Calu3 (cell line): ENCODE measurements at regions of chr11 and their contacts with region 1.

Region 1: GRCh38 chr11:18105802-18106574 is at the start of gene SAAL1:
- DNase-seq: peak; percentile 91
- H3K4me3 Mint-ChIP-seq: peak within 1 kb of the TSS; percentile 97
- H3K27ac Mint-ChIP-seq: peak within 1 kb of the TSS; percentile 81
- H3K4me1 Mint-ChIP-seq: peaks cover 21% of the 10 kb centered on the region
- H3K27me3 Mint-ChIP-seq: peaks cover 11% of the 10 kb centered on the region
- CTCF ChIP-seq: peak; percentile 79
- total RNA-seq, gene SAAL1: 23.9 and 29.3 TPM in 2 replicates

Region 2: GRCh38 chr11:17927681-17928347 is 178.2 kb before region 1 on chr11:
- CTCF ChIA-PET with region 1: no interaction called
- intact Hi-C with region 1: no loop called
- DNase-seq: no peak
- H3K4me3 Mint-ChIP-seq: no peak overlapping the region
- H3K27ac Mint-ChIP-seq: no peak overlapping the region
- H3K4me1 Mint-ChIP-seq: no peaks in the 10 kb centered on the region
- H3K27me3 Mint-ChIP-seq: no peaks in the 10 kb centered on the region
- CTCF ChIP-seq: no peak

Region 3: DNA sequence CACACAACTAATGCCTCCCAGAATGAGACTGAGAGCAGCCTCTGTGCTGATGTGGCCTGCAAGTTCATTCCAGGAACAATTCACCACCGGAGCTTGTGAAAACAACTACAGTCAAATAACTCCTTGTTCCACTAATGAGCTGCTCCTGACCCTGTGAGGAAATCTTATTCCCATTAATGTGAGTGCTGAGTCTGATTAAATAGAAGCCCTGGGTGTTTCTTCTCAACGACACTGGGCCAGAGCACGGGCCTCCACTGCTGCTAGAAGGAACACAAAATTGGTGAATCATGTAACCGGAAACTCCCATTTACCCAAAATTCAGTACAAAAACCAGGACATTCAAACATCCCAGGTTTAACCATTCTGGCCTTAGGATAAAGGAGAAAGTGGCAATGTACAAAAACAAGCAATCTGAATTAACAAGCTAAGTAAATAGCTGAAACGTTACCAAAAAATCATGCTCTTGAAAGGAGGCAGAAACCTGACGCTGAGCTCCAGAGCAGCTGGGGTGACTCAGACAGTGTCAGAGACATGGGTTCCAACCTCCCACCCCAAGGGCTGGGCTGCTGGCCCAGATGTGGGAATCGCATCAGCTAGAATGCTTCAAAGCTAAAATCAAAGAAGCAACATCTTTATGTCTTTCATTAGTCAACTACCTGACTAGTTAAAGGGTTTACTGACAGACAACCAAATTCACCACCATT is 119.8 kb before region 1 on chr11:
- CTCF ChIA-PET with region 1: no interaction called
- intact Hi-C with region 1: loop called (anchors 5 kb)
- DNase-seq: no peak
- H3K4me3 Mint-ChIP-seq: no peak overlapping the region
- H3K27ac Mint-ChIP-seq: no peak overlapping the region
- H3K4me1 Mint-ChIP-seq: peaks cover 47% of the 10 kb centered on the region
- H3K27me3 Mint-ChIP-seq: no peaks in the 10 kb centered on the region
- CTCF ChIP-seq: no peak

Region 4: GRCh38 chr11:18012863-18013781 is 92.9 kb before region 1 on chr11 and contains the start of gene SERGEF:
- CTCF ChIA-PET with region 1: interaction called, 3 read pairs
- intact Hi-C with region 1: loop called (anchors 10 kb)
- DNase-seq: peak; percentile 98
- H3K4me3 Mint-ChIP-seq: peak within 1 kb of the TSS; percentile 91
- H3K27ac Mint-ChIP-seq: peak within 1 kb of the TSS; percentile 48
- H3K4me1 Mint-ChIP-seq: peaks cover 18% of the 10 kb centered on the region
- H3K27me3 Mint-ChIP-seq: no peaks in the 10 kb centered on the region
- CTCF ChIP-seq: no peak
- total RNA-seq, gene SERGEF: 23.8 and 28.1 TPM in 2 replicates